ENCODE measurements at regions of chr20 and their contacts with region 1.

Region 1: DNA sequence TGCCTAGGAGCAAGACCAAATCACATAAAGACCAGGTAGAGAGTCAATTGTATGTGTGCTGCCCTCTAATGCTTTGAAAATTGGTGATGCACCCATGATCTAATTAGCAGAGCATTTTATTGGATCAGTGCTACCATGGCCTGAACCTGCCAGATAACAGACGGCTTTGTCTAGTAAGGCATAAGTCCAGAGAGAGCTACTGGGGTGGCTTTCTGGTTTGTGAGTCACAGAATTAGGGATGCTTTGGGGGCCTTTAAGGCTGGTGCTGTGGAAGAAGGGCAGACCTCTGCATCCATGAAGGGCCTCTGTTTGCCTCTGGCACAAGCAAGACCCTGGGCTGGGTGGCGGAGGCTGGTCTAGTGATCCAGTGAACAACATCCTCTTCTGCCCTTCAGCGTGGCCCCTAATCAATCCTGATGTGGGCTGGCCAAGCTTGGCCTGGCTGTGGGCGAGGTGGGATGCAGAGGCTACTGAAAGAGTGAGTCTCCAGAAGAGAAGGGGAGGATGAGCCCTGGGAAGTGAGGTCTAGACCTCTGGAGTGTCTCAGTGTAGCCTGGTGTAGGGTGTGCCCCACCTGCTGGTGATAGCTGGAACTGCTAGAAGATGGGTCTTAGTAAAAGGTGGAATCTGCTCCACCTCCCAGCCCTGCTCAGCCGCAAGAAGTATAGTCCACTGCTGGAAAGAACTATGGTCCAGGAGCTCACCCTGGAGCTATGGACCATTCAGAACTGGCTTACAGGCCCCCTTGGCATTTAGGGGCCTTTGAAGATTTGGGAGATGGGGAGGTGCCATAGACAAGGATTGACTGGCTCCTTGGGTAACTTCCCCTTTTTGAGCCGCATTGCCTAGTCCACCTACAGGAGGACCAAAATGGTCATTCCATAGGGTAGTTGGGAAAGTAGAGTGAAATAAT is 36.7 kb upstream of the AAR2 start:
- DNase-seq: peak; percentile 56
- H3K4me3 ChIP-seq: no peak overlapping the region
- H3K27ac ChIP-seq: no peak overlapping the region
- H3K27me3 ChIP-seq: no peaks in the 10 kb centered on the region
- CTCF ChIP-seq: peak; percentile 94

Region 2: DNA sequence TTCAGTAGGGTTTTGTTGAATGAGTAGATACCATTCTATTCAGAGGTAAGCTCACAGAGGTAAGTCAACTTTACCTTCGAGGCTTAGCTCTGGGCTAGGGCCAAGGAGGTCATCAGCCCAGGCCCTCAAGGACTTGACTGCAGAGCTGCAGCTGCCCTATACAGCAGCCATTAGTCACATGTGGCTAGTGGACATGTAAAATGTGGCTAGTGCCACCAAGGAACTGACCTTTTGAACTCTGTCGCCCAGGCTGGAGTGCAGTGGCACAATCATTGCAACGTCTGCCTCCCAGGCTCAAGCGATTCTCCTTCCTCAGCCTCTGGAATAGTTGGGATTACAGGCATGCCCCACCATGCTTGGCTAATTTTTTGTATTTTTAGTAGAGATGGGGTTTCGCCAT is 93.0 kb before region 1 on chr20:
- CTCF ChIA-PET with region 1: interaction called, 11 read pairs
- POLR2A ChIA-PET with region 1: no interaction called
- DNase-seq: no peak
- H3K4me3 ChIP-seq: no peak overlapping the region
- H3K27ac ChIP-seq: no peak overlapping the region
- H3K27me3 ChIP-seq: peaks cover 4% of the 10 kb centered on the region
- CTCF ChIP-seq: no peak

Region 3: GRCh38 chr20:36173451-36173933 is 26.1 kb before region 1 on chr20:
- CTCF ChIA-PET with region 1: interaction called, 10 read pairs
- POLR2A ChIA-PET with region 1: no interaction called
- DNase-seq: no peak
- H3K4me3 ChIP-seq: no peak overlapping the region
- H3K27ac ChIP-seq: no peak overlapping the region
- H3K27me3 ChIP-seq: no peaks in the 10 kb centered on the region
- CTCF ChIP-seq: no peak

Region 4: GRCh38 chr20:36214684-36215256 is 15.2 kb after region 1 on chr20:
- CTCF ChIA-PET with region 1: interaction called, 34 read pairs
- POLR2A ChIA-PET with region 1: no interaction called
- DNase-seq: peak; percentile 4
- H3K4me3 ChIP-seq: no peak overlapping the region
- H3K27ac ChIP-seq: no peak overlapping the region
- H3K27me3 ChIP-seq: no peaks in the 10 kb centered on the region
- CTCF ChIP-seq: peak; percentile 80

Region 5: DNA sequence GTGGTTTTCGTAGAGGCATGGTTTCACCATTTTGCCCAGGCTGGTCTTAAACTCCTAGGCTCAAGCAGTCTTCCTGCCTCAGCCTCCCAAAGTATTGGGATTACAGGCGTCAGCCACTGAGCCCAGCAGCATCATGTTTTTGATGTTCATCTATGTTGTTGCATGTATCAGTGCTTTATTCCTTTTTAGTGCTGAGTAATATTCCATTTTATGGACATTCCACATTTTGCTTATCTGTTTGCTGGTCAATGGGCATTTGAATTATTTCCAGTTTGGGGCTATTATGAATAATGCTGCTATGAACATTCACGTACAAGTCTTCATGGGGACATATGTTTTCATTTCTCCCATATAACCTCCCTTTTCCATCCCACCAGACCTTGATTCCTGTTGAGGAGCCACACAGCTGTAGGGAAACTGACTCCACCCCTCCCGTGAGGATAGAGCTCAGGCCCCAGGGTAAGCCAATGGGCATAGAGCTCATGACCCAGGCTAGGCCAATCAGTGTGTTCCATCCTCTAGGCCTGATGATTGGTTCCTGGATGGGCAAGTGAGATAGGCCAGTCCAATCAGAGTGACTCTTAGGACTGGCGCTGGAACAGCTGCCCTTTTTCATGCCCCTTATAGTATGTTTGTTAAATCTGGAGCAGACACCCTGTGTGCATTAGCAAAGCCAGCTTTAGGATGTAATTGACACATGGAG is 156.0 kb after region 1 on chr20:
- CTCF ChIA-PET with region 1: no interaction called
- POLR2A ChIA-PET with region 1: no interaction called
- DNase-seq: no peak
- H3K4me3 ChIP-seq: no peak overlapping the region
- H3K27ac ChIP-seq: no peak overlapping the region
- H3K27me3 ChIP-seq: peaks cover 5% of the 10 kb centered on the region
- CTCF ChIP-seq: no peak